HepG2 (cell line): ENCODE measurements at regions of chr2 and their contacts with region 1.

Region 1: GRCh38 chr2:190319555-190320498 is at the start of gene HIBCH:
- DNase-seq: peak; percentile 99
- ATAC-seq: peak; percentile 97
- H3K4me3 ChIP-seq: peak within 1 kb of the TSS; percentile 78 to 86 (median 83)
- H3K27ac ChIP-seq: peak within 1 kb of the TSS; percentile 74
- H3K4me1 ChIP-seq: peaks cover 49% of the 10 kb centered on the region
- H3K27me3 ChIP-seq: no peaks in the 10 kb centered on the region; a peak in 1 of 5 replicates
- CTCF ChIP-seq: peak; percentile 95
- EP300 ChIP-seq: no peak; a peak in 1 of 4 replicates
- POLR2A ChIP-seq: peak; percentile 86 to 90
- RAD21 ChIP-seq: peak; percentile 69; the same call in 1 of the 2 replicates
- total RNA-seq, gene HIBCH: 49.5 and 67.0 TPM in 2 replicates

Region 2: GRCh38 chr2:189762551-189763298 is 557.1 kb before region 1 on chr2 and contains the start of gene OSGEPL1:
- CTCF ChIA-PET with region 1: no interaction called
- POLR2A ChIA-PET with region 1: interaction called, 4 read pairs
- in situ Hi-C with region 1: no loop called
- intact Hi-C with region 1: loop called (anchors 10 kb)
- DNase-seq: peak; percentile 99
- ATAC-seq: peak; percentile 99
- H3K4me3 ChIP-seq: peak within 1 kb of the TSS; percentile 59 to 86 (median 83)
- H3K27ac ChIP-seq: peak within 1 kb of the TSS; percentile 82
- H3K4me1 ChIP-seq: peaks cover 20% of the 10 kb centered on the region
- H3K27me3 ChIP-seq: no peaks in the 10 kb centered on the region
- CTCF ChIP-seq: peak; percentile 76
- EP300 ChIP-seq: no peak; a peak in 2 of 4 replicates
- POLR2A ChIP-seq: peak; percentile 93 to 97
- RAD21 ChIP-seq: 0 out of 2 replicates have a peak, but pooled peaks have one; percentile 47
- total RNA-seq, gene OSGEPL1: 10.2 and 11.1 TPM in 2 replicates

Region 3: GRCh38 chr2:190202604-190203003 is 117.2 kb before region 1 on chr2:
- CTCF ChIA-PET with region 1: no interaction called
- POLR2A ChIA-PET with region 1: no interaction called
- in situ Hi-C with region 1: no loop called
- intact Hi-C with region 1: no loop called
- DNase-seq: peak; percentile 20
- ATAC-seq: peak; percentile 62
- H3K4me3 ChIP-seq: no peak overlapping the region
- H3K27ac ChIP-seq: no peak overlapping the region
- H3K4me1 ChIP-seq: no peaks in the 10 kb centered on the region
- H3K27me3 ChIP-seq: no peaks in the 10 kb centered on the region
- CTCF ChIP-seq: peak; percentile 10; the same call in 1 of the 2 replicates
- EP300 ChIP-seq: no peak
- POLR2A ChIP-seq: no peak
- RAD21 ChIP-seq: no peak

Region 4: DNA sequence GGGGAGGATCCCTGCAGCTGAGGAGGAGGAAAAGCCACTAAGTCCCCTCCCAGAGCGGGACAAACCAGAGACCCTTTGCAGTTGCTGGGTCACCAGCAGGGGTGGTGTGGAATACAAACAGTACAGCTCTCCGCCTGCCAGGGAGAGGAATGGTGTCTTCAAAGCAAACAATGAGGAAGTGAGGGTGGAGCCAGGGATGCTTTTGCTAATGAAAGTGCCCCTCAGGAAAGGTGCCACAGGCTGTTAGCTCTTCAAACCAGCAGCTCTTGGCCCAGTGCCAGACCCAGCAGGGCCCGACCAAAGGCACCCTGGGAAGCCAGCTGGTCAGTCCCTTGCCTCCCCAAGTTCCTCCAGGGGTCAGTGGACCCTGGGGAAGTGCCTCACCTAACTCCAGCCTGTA is 103.0 kb before region 1 on chr2:
- CTCF ChIA-PET with region 1: no interaction called
- POLR2A ChIA-PET with region 1: no interaction called
- in situ Hi-C with region 1: no loop called
- intact Hi-C with region 1: no loop called
- DNase-seq: peak; percentile 35
- ATAC-seq: peak; percentile 65
- H3K4me3 ChIP-seq: no peak overlapping the region
- H3K27ac ChIP-seq: no peak overlapping the region
- H3K4me1 ChIP-seq: no peaks in the 10 kb centered on the region
- H3K27me3 ChIP-seq: no peaks in the 10 kb centered on the region
- CTCF ChIP-seq: no peak
- EP300 ChIP-seq: no peak
- POLR2A ChIP-seq: no peak
- RAD21 ChIP-seq: no peak

Region 5: DNA sequence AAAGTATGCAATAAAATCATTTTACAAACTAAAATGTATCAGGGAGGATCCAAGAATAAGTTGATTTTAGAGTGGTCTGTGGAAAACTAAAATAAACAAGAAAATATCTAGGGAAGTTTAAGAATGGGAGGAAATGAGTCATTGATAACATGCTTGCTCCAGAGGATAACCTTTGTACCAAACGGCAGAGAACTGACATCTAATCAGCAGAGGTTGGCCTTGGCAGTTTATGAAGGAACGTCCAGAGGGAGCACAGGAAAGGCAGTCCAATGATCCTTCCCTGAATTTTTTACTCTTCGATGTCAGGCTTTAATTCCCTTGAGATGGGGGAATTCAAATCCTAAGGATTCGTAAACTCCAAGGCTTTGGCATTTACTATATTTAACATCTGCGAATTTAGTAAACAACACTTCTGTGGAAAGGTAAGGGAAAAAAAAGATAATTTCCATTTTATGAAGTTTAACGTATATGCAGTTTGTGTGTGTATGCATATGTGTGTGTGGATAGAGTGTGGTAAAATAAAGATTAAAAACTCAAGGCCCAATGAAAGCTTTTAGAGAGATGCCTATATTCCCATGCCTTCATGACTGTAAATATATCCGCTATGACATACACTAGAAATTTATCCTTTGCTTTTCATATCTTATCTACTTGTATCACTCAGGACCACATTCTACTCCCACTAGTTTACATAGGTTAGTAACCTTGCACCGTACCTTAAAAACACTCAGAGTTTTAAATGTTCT is 14.8 kb after region 1 on chr2:
- CTCF ChIA-PET with region 1: interaction called, 3 read pairs
- POLR2A ChIA-PET with region 1: interaction called, 8 read pairs
- in situ Hi-C with region 1: no loop called
- intact Hi-C with region 1: loop called (anchors 2 kb)
- DNase-seq: peak; percentile 96
- ATAC-seq: peak; percentile 96
- H3K4me3 ChIP-seq: peak overlapping the region; percentile 59 to 70 (median 67); a peak in 5 of 6 replicates
- H3K27ac ChIP-seq: peak overlapping the region; percentile 84
- H3K4me1 ChIP-seq: peaks cover 54% of the 10 kb centered on the region
- H3K27me3 ChIP-seq: no peaks in the 10 kb centered on the region
- CTCF ChIP-seq: 0 out of 2 replicates have a peak, but pooled peaks have one; percentile 25
- EP300 ChIP-seq: peak; percentile 85 to 96
- POLR2A ChIP-seq: peak; percentile 72 to 77
- RAD21 ChIP-seq: no peak

Region 6: GRCh38 chr2:190352668-190353536 is 33.1 kb after region 1 on chr2:
- CTCF ChIA-PET with region 1: no interaction called
- POLR2A ChIA-PET with region 1: interaction called, 19 read pairs
- in situ Hi-C with region 1: no loop called
- intact Hi-C with region 1: loop called (anchors 2 kb)
- DNase-seq: peak; percentile 99
- ATAC-seq: peak; percentile 98
- H3K4me3 ChIP-seq: peak overlapping the region in 2 of 3 experiments; percentile 24 to 41; a peak in 3 of 6 replicates
- H3K27ac ChIP-seq: peak overlapping the region; percentile 85
- H3K4me1 ChIP-seq: peaks cover 76% of the 10 kb centered on the region
- H3K27me3 ChIP-seq: no peaks in the 10 kb centered on the region
- CTCF ChIP-seq: peak; percentile 28; the same call in 1 of the 2 replicates
- EP300 ChIP-seq: peak; percentile 79 to 98; a peak in 3 of 4 replicates
- POLR2A ChIP-seq: peak in 1 of 2 experiments; percentile 32; a peak in 1 of 4 replicates
- RAD21 ChIP-seq: peak; percentile 49

Region 7: GRCh38 chr2:190534310-190535120 is 214.7 kb after region 1 on chr2 and contains the start of gene NEMP2:
- CTCF ChIA-PET with region 1: no interaction called
- POLR2A ChIA-PET with region 1: interaction called, 11 read pairs
- in situ Hi-C with region 1: no loop called
- intact Hi-C with region 1: no loop called
- DNase-seq: peak; percentile 77
- ATAC-seq: peak; percentile 91
- H3K4me3 ChIP-seq: peak within 1 kb of the TSS; percentile 77 to 90 (median 85)
- H3K27ac ChIP-seq: peak within 1 kb of the TSS; percentile 91
- H3K4me1 ChIP-seq: peaks cover 50% of the 10 kb centered on the region
- H3K27me3 ChIP-seq: no peaks in the 10 kb centered on the region
- CTCF ChIP-seq: peak; percentile 37; the same call in 1 of the 2 replicates
- EP300 ChIP-seq: peak; percentile 32 to 36; a peak in 2 of 4 replicates
- POLR2A ChIP-seq: peak; percentile 90
- RAD21 ChIP-seq: peak; percentile 75
- total RNA-seq, gene NEMP2: 7.8 and 9.8 TPM in 2 replicates